GM10248 (cell line): ENCODE measurements at regions of chr5 and their contacts with region 1.

Region 1: GRCh38 chr5:140145818-140146522 is 20.2 kb downstream of the IGIP start:
- DNase-seq: peak; percentile 76
- CTCF ChIP-seq: peak; percentile 64

Region 2: DNA sequence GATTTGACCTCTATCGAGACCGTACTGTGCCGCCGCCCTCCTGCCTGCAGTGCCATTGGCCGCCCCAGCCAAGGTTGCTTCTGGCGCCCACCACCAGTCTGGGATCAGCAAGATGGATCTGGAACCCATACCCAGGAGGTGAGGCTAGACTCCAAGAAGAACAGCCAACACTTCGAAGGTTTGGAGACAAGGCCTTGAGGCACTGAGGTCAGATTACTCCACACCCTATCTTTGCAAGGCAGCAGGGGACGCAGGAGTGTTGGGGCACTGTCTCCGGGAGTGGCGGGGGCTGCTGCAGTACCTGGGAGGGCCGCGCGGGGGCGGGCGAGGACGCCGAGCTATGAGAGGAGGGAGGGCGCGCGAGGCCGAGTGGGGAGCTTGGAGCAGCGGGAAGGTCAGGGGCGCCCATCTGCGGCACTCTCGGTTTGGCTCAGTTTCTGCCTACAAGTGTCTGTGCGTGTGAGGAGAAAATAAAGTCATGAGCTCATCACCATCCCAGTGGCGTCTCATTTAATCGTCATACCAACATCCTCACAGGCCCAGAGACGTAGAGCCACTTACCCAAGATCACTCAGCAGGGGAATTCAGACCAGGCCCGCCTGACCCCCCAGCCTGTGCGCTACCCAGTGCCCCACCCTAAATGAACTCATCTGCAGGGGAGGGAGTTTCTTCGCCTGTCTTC is 370.8 kb before region 1 on chr5:
- CTCF ChIA-PET with region 1: interaction called, 10 read pairs
- POLR2A ChIA-PET with region 1: no interaction called
- DNase-seq: peak; percentile 88
- CTCF ChIP-seq: peak; percentile 88

Region 3: DNA sequence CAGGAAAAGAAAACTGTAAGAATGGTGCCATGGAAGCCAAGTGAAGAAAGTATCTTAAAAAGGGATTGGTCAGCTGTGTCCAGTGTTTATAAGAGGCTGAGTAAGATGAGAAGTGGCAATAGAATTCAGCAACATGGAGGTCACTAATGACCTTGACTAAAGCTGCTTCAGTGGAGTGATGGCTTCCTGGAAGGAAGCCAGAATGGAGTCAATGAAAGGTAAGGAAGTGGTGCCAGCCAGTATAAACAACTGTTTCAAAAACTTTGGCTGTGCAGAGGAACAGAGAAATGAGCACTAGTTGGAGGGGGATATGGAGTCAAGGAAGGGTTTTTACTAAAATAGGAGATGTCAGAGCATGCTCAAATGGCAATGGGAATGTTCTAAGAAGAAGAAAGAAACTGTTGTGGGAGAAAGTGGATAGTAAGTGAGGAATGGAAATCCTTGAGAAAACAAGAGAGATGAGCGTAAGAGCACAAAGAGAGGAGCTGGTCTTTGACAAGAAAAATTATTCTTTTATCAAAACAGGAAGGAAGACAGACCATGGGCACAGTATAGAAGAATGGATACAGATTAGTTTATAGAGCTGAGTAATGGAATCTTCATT is 91.8 kb before region 1 on chr5:
- CTCF ChIA-PET with region 1: interaction called, 25 read pairs
- POLR2A ChIA-PET with region 1: no interaction called
- DNase-seq: no peak
- CTCF ChIP-seq: no peak

Region 4: GRCh38 chr5:140073296-140073695 is 72.7 kb before region 1 on chr5:
- CTCF ChIA-PET with region 1: interaction called, 116 read pairs
- POLR2A ChIA-PET with region 1: no interaction called
- DNase-seq: peak; percentile 28
- CTCF ChIP-seq: peak; percentile 28

Region 5: DNA sequence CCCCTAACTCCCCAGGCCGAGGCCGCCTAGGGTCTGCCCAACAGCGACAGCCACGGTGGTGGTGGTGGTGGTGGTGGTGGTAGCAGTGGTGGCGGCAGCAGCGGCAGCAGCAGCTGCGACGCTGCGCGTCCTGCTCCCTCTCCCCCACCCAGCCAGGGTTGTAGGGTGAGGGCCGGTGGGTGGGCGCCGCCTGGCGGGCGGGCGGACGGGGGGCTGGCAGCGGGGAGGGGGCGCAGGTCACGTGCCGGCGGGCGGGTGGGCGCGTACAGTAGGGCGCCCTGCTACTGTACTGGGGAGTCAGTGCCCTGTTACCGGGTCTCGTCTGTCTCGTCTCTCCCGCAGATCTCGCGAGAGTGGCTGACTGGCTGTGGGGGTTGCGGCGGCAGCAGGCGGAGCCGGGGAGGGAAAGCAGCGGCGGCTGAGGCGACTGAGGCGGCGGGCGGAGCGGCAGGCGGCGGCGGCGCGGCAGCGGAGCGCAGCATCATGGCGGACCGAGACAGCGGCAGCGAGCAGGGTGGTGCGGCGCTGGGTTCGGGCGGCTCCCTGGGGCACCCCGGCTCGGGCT is 32.2 kb before region 1 on chr5 and contains the start of gene PURA:
- CTCF ChIA-PET with region 1: interaction called, 29 read pairs
- POLR2A ChIA-PET with region 1: interaction called, 3 read pairs
- DNase-seq: peak; percentile 96
- CTCF ChIP-seq: no peak

Region 6: DNA sequence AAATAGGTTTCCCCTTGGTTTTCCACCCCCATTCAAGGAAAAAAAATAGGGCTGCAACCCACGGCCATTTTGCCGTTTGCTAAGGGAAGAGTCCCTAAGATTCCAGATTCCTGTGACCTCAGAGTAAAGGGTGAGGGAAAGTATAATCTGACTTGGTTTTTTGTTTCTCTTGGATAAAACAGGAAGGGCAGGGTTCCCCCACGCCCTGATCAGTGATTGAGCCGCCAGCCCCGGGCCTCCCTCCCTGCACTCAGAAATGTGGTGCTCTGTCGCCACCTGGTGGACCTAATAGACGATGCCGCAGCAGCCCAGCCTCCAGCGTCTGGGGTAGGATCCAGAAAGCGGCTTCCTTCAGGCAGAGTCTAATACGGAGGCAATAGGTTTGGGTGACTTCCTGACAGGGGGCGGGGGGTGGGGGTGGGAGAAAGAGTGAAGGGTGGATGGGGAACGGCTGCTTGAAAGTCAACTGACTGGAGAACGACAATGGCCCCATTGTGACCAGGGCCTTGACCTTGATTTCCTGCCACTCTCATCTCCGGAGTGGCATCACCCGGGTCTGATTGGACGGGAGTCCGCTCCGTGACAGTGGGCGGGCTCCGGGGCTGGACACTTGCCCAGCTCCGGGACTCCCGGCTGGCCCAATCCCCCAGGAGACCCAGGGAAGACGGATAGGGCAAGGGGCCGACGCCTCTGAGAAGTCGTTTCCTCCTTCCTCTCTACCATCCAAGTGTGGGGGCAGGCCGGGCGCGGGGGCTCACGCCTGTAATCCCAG is 11.2 kb after region 1 on chr5:
- CTCF ChIA-PET with region 1: interaction called, 137 read pairs
- POLR2A ChIA-PET with region 1: no interaction called
- DNase-seq: peak; percentile 90
- CTCF ChIP-seq: peak; percentile 91

Region 7: DNA sequence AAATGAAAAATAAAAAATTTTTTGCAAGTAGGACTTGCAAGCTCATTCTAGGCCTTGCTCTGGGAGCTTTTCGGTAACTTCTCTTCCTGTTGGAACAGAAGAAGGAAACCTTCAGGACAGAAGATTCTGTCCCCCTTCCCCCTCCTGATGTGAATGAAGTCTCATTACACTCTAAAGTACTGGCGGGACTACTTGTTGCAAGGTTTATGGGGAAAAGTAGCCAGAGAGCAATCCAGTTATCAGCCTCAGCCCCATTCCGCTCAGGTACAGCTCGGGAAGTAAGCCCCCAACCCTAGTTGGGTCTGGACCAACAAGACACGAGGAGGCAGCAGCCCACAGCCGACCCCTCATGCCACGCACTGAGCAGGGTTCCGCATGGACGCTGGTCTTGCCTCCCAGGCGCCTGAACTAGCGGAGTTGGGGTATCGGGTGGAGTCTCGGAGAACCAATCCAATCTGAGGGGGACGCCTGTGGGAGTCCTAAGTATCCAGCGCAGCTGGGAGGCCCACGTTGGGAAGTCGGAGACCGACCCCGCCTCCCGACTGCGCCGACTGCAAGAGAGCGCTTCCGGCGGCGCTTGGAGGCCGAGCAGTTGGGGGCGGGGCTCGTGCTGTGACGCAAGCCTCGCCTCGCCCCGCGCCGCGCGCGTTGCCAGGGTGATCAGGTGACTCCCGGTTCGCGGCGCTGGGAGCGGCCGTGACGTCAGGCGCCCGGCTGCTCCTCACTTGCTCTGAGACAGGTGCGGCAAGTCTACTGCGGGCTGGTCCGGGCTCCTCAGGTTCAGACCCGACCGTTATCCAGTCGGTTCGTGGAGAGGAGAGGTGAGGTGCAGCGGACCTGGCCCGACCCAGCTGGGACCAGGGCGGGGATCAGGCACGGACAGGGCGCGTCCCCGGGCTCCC is 28.7 kb after region 1 on chr5 and contains the start of gene CYSTM1:
- CTCF ChIA-PET with region 1: interaction called, 16 read pairs
- POLR2A ChIA-PET with region 1: no interaction called
- DNase-seq: peak; percentile 97
- CTCF ChIP-seq: no peak

Region 8: DNA sequence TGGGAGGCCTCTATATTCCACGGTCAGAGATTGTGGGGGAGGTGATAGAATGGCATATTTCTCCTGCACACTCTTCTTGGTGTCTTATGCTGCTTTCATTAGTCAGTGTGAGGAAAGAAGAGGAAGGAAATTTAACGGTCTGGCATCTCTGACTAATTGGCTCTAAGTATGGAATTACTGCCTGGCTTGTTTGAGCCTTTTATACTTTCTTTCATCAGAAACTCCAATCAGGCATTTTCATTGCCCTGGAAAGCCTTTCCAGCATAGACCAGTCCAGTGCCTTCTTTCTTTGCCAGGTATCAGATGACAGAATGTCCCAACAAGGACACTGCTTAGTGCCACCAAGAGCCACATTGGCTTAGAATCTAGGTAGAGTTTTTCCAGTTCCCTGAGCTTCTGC is 59.2 kb after region 1 on chr5:
- CTCF ChIA-PET with region 1: no interaction called
- POLR2A ChIA-PET with region 1: no interaction called
- DNase-seq: no peak
- CTCF ChIP-seq: no peak